ENCODE measurements at regions of chr6 and their contacts with region 1.

Region 1: GRCh38 chr6:46138281-46138680 is 8.5 kb downstream of the ENPP4 start:
- DNase-seq: no peak
- H3K4me3 ChIP-seq: no peak overlapping the region
- H3K27ac ChIP-seq: no peak overlapping the region
- H3K4me1 ChIP-seq: peaks cover 3 to 12% (median 7%) of the 10 kb centered on the region in 4 donors
- H3K27me3 ChIP-seq: no peaks in the 10 kb centered on the region
- CTCF ChIP-seq: no peak
- EP300 ChIP-seq: no peak
- POLR2A ChIP-seq: no peak

Region 2: DNA sequence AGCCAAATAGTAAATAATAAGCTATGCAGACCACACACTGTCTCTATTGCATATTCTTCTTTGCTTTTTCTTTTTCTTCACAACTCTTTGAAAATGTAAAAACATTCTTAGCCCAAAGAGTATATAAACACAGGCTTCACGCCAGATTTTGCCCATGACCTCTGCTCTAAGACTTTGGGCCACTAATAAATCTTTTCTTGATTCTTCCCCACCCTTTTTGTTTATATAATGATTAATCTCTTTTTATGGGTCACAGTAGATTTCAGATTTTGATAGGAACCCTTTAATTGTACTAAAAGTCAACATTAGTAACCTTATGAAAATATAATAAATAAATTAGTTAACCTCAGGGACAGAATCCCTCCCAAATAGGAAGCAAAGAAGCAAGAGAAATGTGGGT is 48.3 kb after region 1 on chr6:
- intact Hi-C with region 1: loop called (anchors 5 kb)
- DNase-seq: no peak
- H3K4me3 ChIP-seq: no peak overlapping the region
- H3K27ac ChIP-seq: no peak overlapping the region
- H3K4me1 ChIP-seq: peaks cover 9 to 28% (median 12%) of the 10 kb centered on the region in 4 donors
- H3K27me3 ChIP-seq: no peaks in the 10 kb centered on the region
- CTCF ChIP-seq: no peak
- EP300 ChIP-seq: no peak
- POLR2A ChIP-seq: no peak

Region 3: DNA sequence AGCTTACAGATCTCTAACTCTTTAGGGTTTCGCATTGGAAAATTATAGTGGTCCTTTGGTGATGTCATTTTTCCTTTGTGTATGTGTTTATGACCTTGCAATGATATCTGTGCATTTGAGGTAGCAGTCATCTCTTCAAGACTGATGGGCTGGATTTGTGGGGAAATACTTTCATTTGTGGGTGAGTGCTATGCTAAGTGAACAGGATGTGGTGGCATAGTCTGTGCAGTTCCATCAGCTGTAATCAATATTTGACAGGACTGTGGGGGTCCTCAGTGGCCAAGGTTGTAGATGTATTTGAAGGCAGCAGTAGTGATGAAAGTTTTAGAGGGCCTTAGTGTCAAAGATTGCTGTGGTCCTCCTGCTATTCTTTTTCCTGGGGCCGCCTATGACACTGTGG is 434.9 kb after region 1 on chr6:
- intact Hi-C with region 1: no loop called
- DNase-seq: no peak
- H3K4me3 ChIP-seq: no peak overlapping the region
- H3K27ac ChIP-seq: no peak overlapping the region
- H3K4me1 ChIP-seq: no peaks in the 10 kb centered on the region
- H3K27me3 ChIP-seq: no peaks in the 10 kb centered on the region
- CTCF ChIP-seq: no peak
- EP300 ChIP-seq: no peak
- POLR2A ChIP-seq: no peak

Measured in esophagus muscularis mucosa (tissue), 4 donors.